ENCODE measurements at regions of chr15 and their contacts with region 1.

Region 1: GRCh38 chr15:64067564-64068030 is 21.3 kb upstream of the DAPK2 start:
- H3K4me3 ChIP-seq: no peak overlapping the region
- H3K27ac ChIP-seq: no peak overlapping the region
- H3K4me1 ChIP-seq: no peaks in the 10 kb centered on the region
- CTCF ChIP-seq: peak; percentile 44; the same call in 1 of the 2 replicates

Region 2: DNA sequence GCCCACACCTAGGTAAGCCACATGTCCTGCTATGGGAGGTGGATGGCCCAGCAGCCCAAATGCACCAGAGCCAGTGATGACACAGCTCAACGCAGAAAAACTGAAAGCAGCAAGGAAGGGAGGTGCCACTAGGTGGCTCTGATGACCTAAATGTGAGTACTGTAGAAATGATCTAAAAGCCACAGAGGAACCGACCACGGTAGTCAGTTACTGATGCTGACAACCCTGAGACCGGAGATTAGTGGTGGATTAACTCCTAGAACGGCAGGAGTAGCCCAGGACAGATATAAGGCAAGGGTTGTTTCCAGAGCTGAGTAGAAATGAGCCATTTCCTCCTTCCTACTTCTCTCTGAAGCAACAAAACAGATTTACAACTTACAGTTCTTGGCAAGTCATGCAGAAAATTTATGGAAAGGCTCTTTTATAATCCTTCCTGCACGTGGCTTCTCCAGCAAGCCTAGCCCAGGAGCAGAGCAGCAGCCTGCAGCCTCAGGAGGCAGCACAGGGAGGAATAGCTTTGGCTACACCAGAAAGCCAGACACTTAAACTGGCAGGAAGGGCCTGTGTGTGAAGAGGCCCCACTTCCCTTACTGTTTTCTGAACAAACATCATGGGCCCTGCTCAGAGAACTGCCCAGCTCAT is 457.3 kb before region 1 on chr15:
- CTCF ChIA-PET with region 1: interaction called, 12 read pairs
- POLR2A ChIA-PET with region 1: interaction called, 4 read pairs
- H3K4me3 ChIP-seq: no peak overlapping the region
- H3K27ac ChIP-seq: peak overlapping the region; percentile 43; the same call in 1 of the 2 replicates
- H3K4me1 ChIP-seq: peaks cover 4% of the 10 kb centered on the region; the same call in 1 of the 2 replicates
- CTCF ChIP-seq: peak; percentile 68; the same call in 1 of the 2 replicates

Region 3: DNA sequence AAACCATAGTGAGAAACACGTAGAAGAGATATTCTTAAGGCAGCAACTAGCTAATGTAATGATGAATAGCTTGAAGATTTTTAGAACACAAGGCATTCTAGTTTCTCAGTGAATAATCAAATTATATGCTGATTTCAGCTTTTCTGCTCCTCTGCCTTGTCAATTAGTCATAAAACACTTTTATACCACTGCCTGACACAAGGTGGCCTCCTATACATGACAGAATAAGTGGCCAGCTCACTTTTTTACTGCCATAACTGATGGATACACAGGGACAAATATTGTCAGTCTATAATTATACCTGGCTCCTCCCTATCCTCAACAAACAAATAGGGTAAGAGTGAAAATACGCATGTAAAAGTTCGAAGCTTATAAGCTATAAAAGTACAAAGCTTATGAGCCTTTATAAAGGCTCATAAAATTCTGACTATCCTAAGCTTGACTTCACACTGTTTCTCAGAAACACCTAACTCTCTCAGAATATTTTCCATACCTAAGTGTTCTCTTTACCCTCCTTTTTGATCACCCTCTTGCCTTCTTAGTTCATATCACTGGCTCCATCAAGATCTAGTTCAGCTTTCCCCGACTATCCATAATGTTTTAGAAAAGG is 315.4 kb before region 1 on chr15:
- CTCF ChIA-PET with region 1: interaction called, 60 read pairs
- POLR2A ChIA-PET with region 1: no interaction called
- H3K4me3 ChIP-seq: no peak overlapping the region
- H3K27ac ChIP-seq: no peak overlapping the region
- H3K4me1 ChIP-seq: 0 out of 2 replicates have a peak, but pooled peaks cover 2% of the 10 kb centered on the region
- CTCF ChIP-seq: no peak

Region 4: DNA sequence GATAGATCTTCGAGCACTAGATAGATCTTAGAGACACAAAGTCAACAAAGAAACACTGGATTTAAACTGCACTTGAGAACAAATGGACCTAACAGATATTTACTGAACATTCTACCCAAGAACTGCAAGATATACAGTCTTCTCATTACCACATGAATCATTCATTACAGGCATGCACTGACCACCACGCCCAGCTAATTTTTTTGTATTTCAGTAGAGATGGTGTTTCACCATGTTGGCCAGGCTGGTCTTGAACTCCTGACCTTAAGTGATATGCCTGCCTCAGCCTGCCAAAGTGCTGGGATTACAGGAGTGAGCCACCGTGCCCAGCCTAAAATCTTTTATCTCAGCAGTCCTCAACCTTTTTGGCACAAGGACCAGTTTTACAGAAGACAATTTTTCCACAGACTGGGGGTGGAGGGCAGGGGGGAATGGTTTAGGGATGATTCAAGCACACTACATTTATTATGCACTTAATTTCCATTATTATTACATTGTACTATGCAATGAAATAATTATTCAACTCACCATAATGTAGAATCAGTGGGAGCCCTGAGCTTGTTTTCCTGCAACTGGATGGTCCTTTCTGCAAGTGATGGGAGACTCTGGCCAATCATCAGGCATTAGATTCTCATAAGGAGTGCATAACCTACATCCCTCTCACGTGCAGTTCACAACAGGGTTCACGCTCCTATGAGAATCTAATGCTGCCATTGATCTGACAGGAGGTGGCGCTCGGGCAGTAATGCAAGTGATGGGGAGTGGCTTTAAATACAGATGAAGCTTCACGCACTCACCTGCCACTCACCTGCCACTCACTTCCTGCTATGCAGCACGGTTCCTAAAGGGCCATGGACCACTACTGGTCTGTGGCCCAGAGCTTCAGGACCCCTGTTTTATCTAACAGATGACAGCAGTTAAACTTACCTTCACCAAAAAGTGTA is 266.7 kb after region 1 on chr15:
- CTCF ChIA-PET with region 1: no interaction called
- POLR2A ChIA-PET with region 1: no interaction called
- H3K4me3 ChIP-seq: no peak overlapping the region
- H3K27ac ChIP-seq: no peak overlapping the region
- H3K4me1 ChIP-seq: no peaks in the 10 kb centered on the region
- CTCF ChIP-seq: no peak

Measured in HEK293 (cell line).